Ovary (tissue), 10 donors: ENCODE measurements at regions of chr12 and their contacts with region 1.

Region 1: DNA sequence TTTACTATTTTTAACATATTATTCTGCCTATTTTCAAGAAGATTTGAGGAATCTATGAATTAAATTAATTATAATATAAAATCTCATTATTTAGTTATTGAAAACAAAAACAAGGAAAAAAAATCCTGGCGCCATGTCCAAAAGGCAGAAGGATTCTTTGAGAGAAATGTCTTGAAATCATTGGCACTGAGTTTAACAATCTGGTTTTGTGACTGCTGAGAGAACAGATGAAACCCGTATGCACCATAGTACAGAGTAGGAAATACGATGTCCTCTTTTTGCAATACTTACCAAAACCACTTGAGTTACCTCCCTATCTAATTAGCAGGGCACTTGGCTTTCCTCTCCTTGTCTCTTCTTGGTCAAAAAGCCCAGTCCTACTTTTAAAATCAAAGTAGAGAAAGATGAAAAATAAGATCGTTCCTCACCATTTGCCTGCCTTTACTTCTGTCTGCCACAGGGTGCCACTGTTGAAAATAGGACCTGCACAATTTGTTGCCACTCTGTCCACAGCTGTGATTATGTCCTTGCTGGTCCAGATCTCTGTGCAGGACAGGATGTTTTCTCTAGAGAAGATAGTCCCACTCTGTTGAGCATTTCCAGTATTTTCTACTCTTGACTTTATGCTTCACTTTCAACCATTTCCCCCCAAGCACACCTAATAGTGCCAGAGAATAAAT is 179.7 kb downstream of the PDZRN4 start:
- DNase-seq: no peak
- H3K4me3 ChIP-seq: no peak overlapping the region
- H3K27ac ChIP-seq: no peak overlapping the region
- H3K4me1 ChIP-seq: no peaks in the 10 kb centered on the region
- H3K27me3 ChIP-seq: no peaks in the 10 kb centered on the region
- CTCF ChIP-seq: no peak
- EP300 ChIP-seq: no peak
- POLR2A ChIP-seq: no peak

Region 2: GRCh38 chr12:41419131-41419893 is 51.4 kb after region 1 on chr12:
- intact Hi-C with region 1: loop called in 1 of 4 experiments (anchors 2 kb)
- DNase-seq: no peak
- H3K4me3 ChIP-seq: no peak overlapping the region
- H3K27ac ChIP-seq: no peak overlapping the region
- H3K4me1 ChIP-seq: no peaks in the 10 kb centered on the region
- H3K27me3 ChIP-seq: no peaks in the 10 kb centered on the region
- CTCF ChIP-seq: no peak
- EP300 ChIP-seq: no peak
- POLR2A ChIP-seq: no peak